HCT116 (cell line): ENCODE measurements at regions of chr2 and their contacts with region 1.

Region 1: DNA sequence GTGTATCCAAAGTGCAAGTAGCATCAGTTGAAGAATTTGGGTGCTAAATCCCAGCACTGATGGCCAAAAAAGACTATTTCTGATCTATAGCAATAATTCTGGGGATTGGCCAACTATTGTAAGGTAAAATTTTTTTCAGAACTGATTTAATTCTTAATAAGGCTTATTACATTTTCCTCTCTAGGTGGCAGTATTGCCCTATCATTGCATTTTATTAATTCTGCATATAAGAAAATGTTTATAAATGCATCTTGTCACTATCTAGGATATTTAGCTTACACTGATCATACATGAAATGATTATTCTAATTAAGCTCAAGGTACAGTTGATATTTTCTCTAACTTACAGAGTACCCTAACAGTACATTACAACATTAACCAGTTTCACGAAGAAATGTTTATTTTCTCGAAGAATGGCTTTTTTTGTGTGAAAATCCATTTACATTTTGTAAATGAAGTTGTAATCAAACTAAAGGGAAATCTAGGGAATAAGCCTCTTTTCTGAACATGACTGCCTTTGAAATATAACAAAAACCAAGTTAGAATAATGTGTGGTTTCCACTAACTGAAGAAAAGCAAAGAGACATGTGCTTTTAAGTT is 11.0 kb downstream of the TTN start:
- DNase-seq: peak; percentile 22
- ATAC-seq: no peak
- H3K4me3 ChIP-seq: no peak overlapping the region
- H3K27ac ChIP-seq: no peak overlapping the region
- H3K4me1 ChIP-seq: no peaks in the 10 kb centered on the region
- H3K27me3 ChIP-seq: 0 out of 2 replicates have a peak, but pooled peaks cover 5% of the 10 kb centered on the region
- CTCF ChIP-seq: peak; percentile 29 to 73 (median 70); a peak in 5 of 6 replicates
- POLR2A ChIP-seq: no peak
- RAD21 ChIP-seq: peak; percentile 85

Region 2: GRCh38 chr2:176986487-176986886 is 1809.7 kb before region 1 on chr2:
- CTCF ChIA-PET with region 1: no interaction called
- POLR2A ChIA-PET with region 1: no interaction called
- RAD21 ChIA-PET with region 1: no interaction called
- intact Hi-C with region 1: no loop called
- DNase-seq: no peak
- ATAC-seq: no peak
- H3K4me3 ChIP-seq: no peak overlapping the region
- H3K27ac ChIP-seq: no peak overlapping the region
- H3K4me1 ChIP-seq: no peaks in the 10 kb centered on the region
- H3K27me3 ChIP-seq: peaks cover 43% of the 10 kb centered on the region
- CTCF ChIP-seq: no peak
- POLR2A ChIP-seq: no peak
- RAD21 ChIP-seq: no peak

Region 3: DNA sequence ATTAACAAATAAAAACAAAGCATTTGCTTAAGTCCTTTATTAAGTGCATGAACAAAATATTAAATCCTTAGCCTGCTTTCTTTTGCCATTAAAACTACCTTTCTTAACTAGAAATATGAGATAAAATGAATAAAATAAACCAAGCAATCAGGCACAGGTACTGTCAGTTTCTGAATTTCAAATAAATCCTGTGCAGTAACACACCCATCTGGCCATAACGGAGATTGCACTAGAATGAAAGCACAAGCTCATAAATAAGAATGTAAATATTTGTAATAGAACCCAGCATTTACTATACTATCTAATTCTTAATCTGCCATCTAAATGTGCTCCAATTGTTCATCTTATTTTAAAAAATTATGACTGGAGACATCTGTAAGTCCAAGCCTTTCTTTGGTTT is 377.1 kb before region 1 on chr2:
- CTCF ChIA-PET with region 1: no interaction called
- POLR2A ChIA-PET with region 1: no interaction called
- RAD21 ChIA-PET with region 1: no interaction called
- intact Hi-C with region 1: no loop called
- DNase-seq: no peak
- ATAC-seq: no peak
- H3K4me3 ChIP-seq: no peak overlapping the region
- H3K27ac ChIP-seq: no peak overlapping the region
- H3K4me1 ChIP-seq: peaks cover 2 to 6% of the 10 kb centered on the region in 2 experiments; a peak in 2 of 4 replicates
- H3K27me3 ChIP-seq: no peaks in the 10 kb centered on the region
- CTCF ChIP-seq: peak; percentile 28 to 50 (median 50); a peak in 4 of 6 replicates
- POLR2A ChIP-seq: no peak
- RAD21 ChIP-seq: peak; percentile 61

Region 4: GRCh38 chr2:178747767-178748166 is 48.4 kb before region 1 on chr2:
- CTCF ChIA-PET with region 1: no interaction called
- POLR2A ChIA-PET with region 1: no interaction called
- RAD21 ChIA-PET with region 1: no interaction called
- intact Hi-C with region 1: no loop called
- DNase-seq: no peak
- ATAC-seq: no peak
- H3K4me3 ChIP-seq: no peak overlapping the region
- H3K27ac ChIP-seq: no peak overlapping the region
- H3K4me1 ChIP-seq: no peaks in the 10 kb centered on the region
- H3K27me3 ChIP-seq: peaks cover 86% of the 10 kb centered on the region
- CTCF ChIP-seq: no peak
- POLR2A ChIP-seq: no peak
- RAD21 ChIP-seq: no peak

Region 5: GRCh38 chr2:178914259-178914849 is 118.2 kb after region 1 on chr2:
- CTCF ChIA-PET with region 1: interaction called, 4 read pairs
- POLR2A ChIA-PET with region 1: no interaction called
- RAD21 ChIA-PET with region 1: no interaction called
- intact Hi-C with region 1: loop called (anchors 1 kb)
- DNase-seq: peak; percentile 63
- ATAC-seq: peak; percentile 99
- H3K4me3 ChIP-seq: no peak overlapping the region
- H3K27ac ChIP-seq: no peak overlapping the region
- H3K4me1 ChIP-seq: no peaks in the 10 kb centered on the region
- H3K27me3 ChIP-seq: no peaks in the 10 kb centered on the region
- CTCF ChIP-seq: peak; percentile 73 to 88 (median 83)
- POLR2A ChIP-seq: no peak
- RAD21 ChIP-seq: peak; percentile 84

Region 6: GRCh38 chr2:178928077-178928476 is 131.9 kb after region 1 on chr2:
- CTCF ChIA-PET with region 1: no interaction called
- POLR2A ChIA-PET with region 1: no interaction called
- RAD21 ChIA-PET with region 1: no interaction called
- intact Hi-C with region 1: loop called (anchors 5 kb)
- DNase-seq: no peak
- ATAC-seq: no peak
- H3K4me3 ChIP-seq: no peak overlapping the region
- H3K27ac ChIP-seq: no peak overlapping the region
- H3K4me1 ChIP-seq: no peaks in the 10 kb centered on the region
- H3K27me3 ChIP-seq: no peaks in the 10 kb centered on the region
- CTCF ChIP-seq: no peak
- POLR2A ChIP-seq: no peak
- RAD21 ChIP-seq: no peak

Region 7: GRCh38 chr2:179129574-179130238 is 333.5 kb after region 1 on chr2:
- CTCF ChIA-PET with region 1: interaction called, 12 read pairs
- POLR2A ChIA-PET with region 1: no interaction called
- RAD21 ChIA-PET with region 1: no interaction called
- intact Hi-C with region 1: loop called (anchors 5 kb)
- DNase-seq: no peak
- ATAC-seq: peak; percentile 72
- H3K4me3 ChIP-seq: no peak overlapping the region
- H3K27ac ChIP-seq: no peak overlapping the region
- H3K4me1 ChIP-seq: no peaks in the 10 kb centered on the region
- H3K27me3 ChIP-seq: no peaks in the 10 kb centered on the region
- CTCF ChIP-seq: peak; percentile 57 to 69 (median 65); a peak in 5 of 6 replicates
- POLR2A ChIP-seq: no peak
- RAD21 ChIP-seq: peak; percentile 73

Region 8: DNA sequence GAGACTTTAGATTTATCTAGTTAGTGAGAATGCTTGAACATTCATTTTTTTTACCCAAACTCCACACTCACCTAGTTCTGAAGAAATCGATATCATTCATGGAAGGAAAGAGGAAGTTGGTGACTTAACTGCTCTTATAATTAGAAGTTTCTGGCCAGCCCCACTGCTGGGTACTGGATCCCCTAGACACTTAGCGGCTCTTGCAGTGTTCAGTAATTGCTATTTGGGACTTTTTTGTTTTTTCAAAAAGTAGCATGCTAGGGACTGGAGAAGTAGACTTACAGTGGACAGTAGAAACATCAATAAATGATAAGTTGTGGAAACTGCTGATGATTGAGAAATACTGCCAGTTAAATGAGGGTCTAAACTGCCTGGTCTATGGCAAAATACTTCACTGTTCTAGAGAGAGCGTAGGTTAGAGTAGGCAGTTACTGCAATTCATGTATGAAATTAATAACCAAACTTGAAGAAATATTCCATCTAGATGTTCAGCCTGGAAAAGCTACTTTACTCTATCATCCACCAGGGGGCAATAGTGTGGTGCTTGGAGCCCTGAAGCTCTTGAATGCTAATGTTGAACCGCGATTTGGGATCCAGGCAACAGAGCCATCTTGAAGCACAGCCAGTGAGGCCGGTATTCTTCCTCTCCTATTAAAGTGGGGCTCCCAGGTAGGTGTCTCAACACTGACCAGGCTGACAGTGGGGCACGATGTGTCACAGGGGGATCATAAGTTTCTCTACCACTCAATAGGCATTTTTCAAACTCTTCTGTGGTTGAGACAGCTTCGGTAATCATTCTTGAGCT is 614.6 kb after region 1 on chr2:
- CTCF ChIA-PET with region 1: interaction called, 8 read pairs
- POLR2A ChIA-PET with region 1: no interaction called
- RAD21 ChIA-PET with region 1: no interaction called
- intact Hi-C with region 1: loop called (anchors 10 kb)
- DNase-seq: peak; percentile 60
- ATAC-seq: peak; percentile 96
- H3K4me3 ChIP-seq: no peak overlapping the region
- H3K27ac ChIP-seq: no peak overlapping the region
- H3K4me1 ChIP-seq: 0 out of 4 replicates have a peak, but pooled peaks cover 0 to 3% of the 10 kb centered on the region in 2 experiments
- H3K27me3 ChIP-seq: no peaks in the 10 kb centered on the region
- CTCF ChIP-seq: peak; percentile 65 to 84 (median 80); a peak in 5 of 6 replicates
- POLR2A ChIP-seq: no peak
- RAD21 ChIP-seq: peak; percentile 72